Heart right ventricle (tissue), 16 donors: ENCODE measurements at regions of chr9 and their contacts with region 1.

Region 1: DNA sequence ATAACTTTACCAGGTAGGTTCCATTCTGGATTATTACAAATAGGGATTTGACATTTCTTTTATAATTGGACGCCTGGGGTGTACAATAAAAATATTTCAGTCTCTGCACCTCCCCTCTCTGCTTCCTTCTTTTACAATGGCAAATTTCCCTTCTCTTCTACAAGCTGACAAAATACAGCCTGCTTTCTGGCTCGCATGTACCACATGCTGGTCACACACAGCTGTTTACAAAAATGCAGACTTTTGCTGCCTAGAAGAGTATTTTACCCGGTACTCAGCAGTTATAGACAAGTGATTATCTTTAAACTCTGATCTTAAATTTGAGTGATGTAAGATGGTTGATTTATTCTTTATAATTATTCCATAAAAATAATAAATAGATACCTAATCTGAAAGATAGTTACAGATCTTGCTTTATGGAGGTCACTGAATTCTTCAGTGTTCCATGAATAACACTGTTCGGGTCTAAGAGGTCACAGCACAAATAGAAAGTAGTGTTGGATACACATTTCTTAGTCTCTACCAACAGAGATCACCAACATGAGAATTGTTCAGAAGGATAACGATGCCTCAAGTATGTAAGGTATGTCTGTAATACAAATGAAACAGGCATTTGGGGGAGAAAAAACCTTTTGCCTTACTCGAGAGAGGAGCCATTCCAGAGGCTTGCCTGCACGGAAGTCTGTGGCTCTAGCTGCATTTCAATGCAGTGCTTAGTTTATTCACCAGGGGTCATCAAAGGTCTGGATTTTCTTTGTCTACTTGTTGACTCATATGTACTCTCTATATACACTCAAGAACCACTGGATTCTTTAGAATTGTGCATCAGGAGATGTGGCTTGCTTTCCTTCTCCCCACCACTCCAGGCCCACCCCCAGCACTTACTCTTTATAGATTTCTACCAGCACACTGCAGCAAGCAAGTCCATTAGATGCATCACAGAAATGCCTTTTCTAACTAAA is 206.6 kb upstream of the RFX3 start:
- DNase-seq: peak in 1 of 2 donors; percentile 53
- ATAC-seq: peak; percentile 88 to 97 (median 95)
- H3K4me3 ChIP-seq: peak overlapping the region in 7 of 10 donors; percentile 8 to 38 (median 22)
- H3K27ac ChIP-seq: peak overlapping the region in 5 of 10 donors; percentile 4 to 51 (median 42)
- H3K4me1 ChIP-seq: peaks cover 0 to 23% (median 6%) of the 10 kb centered on the region in 9 donors
- H3K27me3 ChIP-seq: no peaks in the 10 kb centered on the region
- CTCF ChIP-seq: peak; percentile 36 to 84 (median 78)

Region 2: GRCh38 chr9:3467593-3468219 is 264.7 kb before region 1 on chr9:
- intact Hi-C with region 1: loop called in 1 of 10 experiments (anchors 10 kb)
- DNase-seq: peak; percentile 14 to 62
- ATAC-seq: peak; percentile 78 to 94 (median 89)
- H3K4me3 ChIP-seq: no peak overlapping the region
- H3K27ac ChIP-seq: no peak overlapping the region
- H3K4me1 ChIP-seq: peaks cover 0 to 35% (median 21%) of the 10 kb centered on the region in 9 donors
- H3K27me3 ChIP-seq: no peaks in the 10 kb centered on the region
- CTCF ChIP-seq: peak; percentile 57 to 92 (median 80)

Region 3: DNA sequence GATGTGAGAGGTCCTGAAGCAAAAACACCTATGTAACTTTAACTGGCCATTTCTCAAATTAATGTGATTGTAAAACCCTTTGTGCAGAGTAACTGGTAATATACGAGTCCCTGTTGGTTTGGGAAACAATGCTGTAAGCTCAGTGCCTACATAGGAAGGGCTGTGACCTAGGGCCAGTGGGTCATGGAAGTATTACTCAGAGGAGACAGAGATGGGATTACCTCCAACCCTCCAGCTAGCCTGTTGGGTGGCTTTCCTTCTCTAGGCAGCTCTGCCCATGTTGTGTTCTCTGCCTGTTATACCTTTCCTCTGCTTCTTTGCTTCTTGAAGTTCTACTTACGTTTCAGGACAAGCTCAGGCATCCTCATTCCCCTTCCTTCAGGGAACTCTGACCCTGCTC is 88.3 kb after region 1 on chr9:
- intact Hi-C with region 1: no loop called
- DNase-seq: no peak
- ATAC-seq: no peak
- H3K4me3 ChIP-seq: no peak overlapping the region
- H3K27ac ChIP-seq: no peak overlapping the region
- H3K4me1 ChIP-seq: no peaks in the 10 kb centered on the region
- H3K27me3 ChIP-seq: peaks cover 0 to 3% (median 0%) of the 10 kb centered on the region in 7 donors
- CTCF ChIP-seq: no peak

Region 4: GRCh38 chr9:4228606-4229005 is 496.2 kb after region 1 on chr9:
- intact Hi-C with region 1: loop called in 9 of 10 experiments (anchors 1 to 10 kb)
- DNase-seq: no peak
- ATAC-seq: peak in 4 of 8 donors; percentile 62 to 75 (median 68)
- H3K4me3 ChIP-seq: no peak overlapping the region
- H3K27ac ChIP-seq: no peak overlapping the region
- H3K4me1 ChIP-seq: peaks cover 0 to 22% (median 0%) of the 10 kb centered on the region in 9 donors
- H3K27me3 ChIP-seq: no peaks in the 10 kb centered on the region
- CTCF ChIP-seq: peak; percentile 25 to 73 (median 56)

Region 5: GRCh38 chr9:4344946-4345345 is 612.6 kb after region 1 on chr9:
- intact Hi-C with region 1: loop called in 2 of 10 experiments (anchors 10 kb)
- DNase-seq: no peak
- ATAC-seq: no peak
- H3K4me3 ChIP-seq: no peak overlapping the region
- H3K27ac ChIP-seq: no peak overlapping the region
- H3K4me1 ChIP-seq: no peaks in the 10 kb centered on the region
- H3K27me3 ChIP-seq: no peaks in the 10 kb centered on the region
- CTCF ChIP-seq: no peak

Region 6: GRCh38 chr9:4375424-4376200 is 643.3 kb after region 1 on chr9:
- intact Hi-C with region 1: loop called in 2 of 10 experiments (anchors 5 kb)
- DNase-seq: no peak
- ATAC-seq: peak in 2 of 8 donors; percentile 66 to 67
- H3K4me3 ChIP-seq: no peak overlapping the region
- H3K27ac ChIP-seq: no peak overlapping the region
- H3K4me1 ChIP-seq: no peaks in the 10 kb centered on the region
- H3K27me3 ChIP-seq: peaks cover 0 to 29% (median 0%) of the 10 kb centered on the region in 7 donors
- CTCF ChIP-seq: peak in 8 of 9 donors; percentile 17 to 65 (median 53)